ENCODE measurements at regions of chr9 and their contacts with region 1.

Region 1: DNA sequence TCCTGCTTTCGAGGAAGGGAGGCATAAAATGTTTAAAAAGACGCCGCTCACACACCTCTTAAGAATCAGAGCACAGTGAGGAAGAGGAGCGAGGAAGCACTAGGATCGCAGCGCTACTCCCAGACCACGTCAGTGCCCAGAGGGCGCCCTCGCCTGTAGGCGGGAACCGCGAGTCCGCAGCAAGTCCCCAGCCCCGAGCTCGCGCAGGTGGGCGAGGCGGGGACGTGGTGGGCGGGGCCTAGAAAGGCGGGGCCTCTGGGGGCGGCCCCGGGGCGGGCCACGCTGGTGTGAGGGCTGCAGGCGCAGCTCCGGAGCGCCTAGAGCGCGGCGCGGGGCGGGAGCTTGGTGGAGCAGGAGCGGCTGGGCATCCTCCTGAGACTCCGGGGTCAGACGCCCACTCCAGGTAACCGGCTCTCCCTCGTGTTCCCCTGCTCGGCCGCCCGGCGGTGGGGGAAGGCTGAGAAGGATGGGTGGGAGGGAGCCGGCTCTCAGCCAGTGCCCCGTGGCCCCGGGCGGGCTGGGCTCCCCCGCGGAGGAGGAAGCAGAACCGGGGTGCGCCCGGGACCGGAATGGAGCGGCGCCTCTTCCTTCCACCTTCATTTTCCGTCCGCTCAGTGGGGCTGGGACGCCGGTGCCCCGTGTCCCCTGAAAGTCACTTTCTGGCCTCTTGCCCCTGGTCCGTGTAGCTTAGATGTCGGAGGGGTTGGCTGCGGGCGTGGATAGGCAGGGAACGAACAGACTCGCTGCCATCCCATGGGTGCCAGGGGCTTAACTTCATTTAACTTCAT is at the start of gene GCNT1:
- DNase-seq: peak; percentile 99
- ATAC-seq: peak; percentile 95
- H3K4me3 Mint-ChIP-seq: peak within 1 kb of the TSS; percentile 94
- H3K27ac Mint-ChIP-seq: peak within 1 kb of the TSS; percentile 84
- H3K4me1 Mint-ChIP-seq: peaks cover 57% of the 10 kb centered on the region
- H3K27me3 Mint-ChIP-seq: no peaks in the 10 kb centered on the region
- CTCF ChIP-seq: no peak
- total RNA-seq, gene GCNT1: 9.2 and 10.6 TPM in 2 replicates

Region 2: GRCh38 chr9:75027187-75028107 is 1431.7 kb before region 1 on chr9:
- CTCF ChIA-PET with region 1: no interaction called
- POLR2A ChIA-PET with region 1: interaction called, 3 read pairs
- intact Hi-C with region 1: loop called (anchors 5 kb)
- DNase-seq: no peak
- ATAC-seq: peak; percentile 29
- H3K4me3 Mint-ChIP-seq: peak overlapping the region; percentile 96
- H3K27ac Mint-ChIP-seq: peak overlapping the region; percentile 95
- H3K4me1 Mint-ChIP-seq: peaks cover 36% of the 10 kb centered on the region
- H3K27me3 Mint-ChIP-seq: no peaks in the 10 kb centered on the region
- CTCF ChIP-seq: no peak

Region 3: GRCh38 chr9:76403352-76403751 is 55.7 kb before region 1 on chr9:
- CTCF ChIA-PET with region 1: no interaction called
- POLR2A ChIA-PET with region 1: no interaction called
- intact Hi-C with region 1: loop called (anchors 2 kb)
- DNase-seq: no peak
- ATAC-seq: peak; percentile 70
- H3K4me3 Mint-ChIP-seq: peak overlapping the region; percentile 8
- H3K27ac Mint-ChIP-seq: peak overlapping the region; percentile 19
- H3K4me1 Mint-ChIP-seq: peaks cover 13% of the 10 kb centered on the region
- H3K27me3 Mint-ChIP-seq: no peaks in the 10 kb centered on the region
- CTCF ChIP-seq: peak; percentile 20

Region 4: DNA sequence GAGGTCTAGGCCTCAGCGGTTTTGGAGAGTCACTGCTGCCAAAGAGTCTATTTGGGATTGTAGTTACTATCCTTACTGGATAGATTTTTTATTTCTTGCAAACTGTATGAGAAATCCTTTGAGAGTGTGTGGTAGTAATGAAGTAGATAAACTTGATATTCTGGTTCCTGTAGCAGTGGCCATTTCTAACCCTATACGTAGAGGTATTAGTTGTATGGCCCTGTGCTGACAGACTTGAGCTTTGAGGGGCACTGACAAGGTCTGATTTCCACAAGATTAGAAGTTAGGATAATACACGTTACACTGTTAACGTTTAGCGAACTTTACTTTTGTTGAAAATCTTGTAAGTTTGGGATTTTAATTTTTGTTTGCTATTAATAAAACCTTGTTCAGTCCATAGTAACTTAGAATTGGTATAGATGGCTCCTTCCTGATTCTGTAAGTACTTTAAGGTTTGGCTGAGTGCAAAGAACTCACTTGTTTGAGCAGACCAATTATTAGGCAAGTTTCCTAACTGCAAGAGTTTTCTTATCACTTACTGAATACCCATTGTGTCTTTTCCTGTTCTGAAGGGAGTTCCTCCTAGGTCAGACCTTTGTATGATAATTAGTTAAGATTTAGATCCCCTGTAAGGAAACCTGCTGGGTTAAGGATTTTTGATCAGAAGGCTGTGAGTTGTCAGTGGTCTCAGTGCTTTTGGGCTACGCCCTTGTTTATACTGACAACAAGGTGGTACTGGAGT is 31.3 kb after region 1 on chr9:
- CTCF ChIA-PET with region 1: interaction called, 4 read pairs
- POLR2A ChIA-PET with region 1: interaction called, 3 read pairs
- intact Hi-C with region 1: loop called (anchors 5 kb)
- DNase-seq: no peak
- ATAC-seq: no peak
- H3K4me3 Mint-ChIP-seq: no peak overlapping the region
- H3K27ac Mint-ChIP-seq: no peak overlapping the region
- H3K4me1 Mint-ChIP-seq: peaks cover 56% of the 10 kb centered on the region
- H3K27me3 Mint-ChIP-seq: no peaks in the 10 kb centered on the region
- CTCF ChIP-seq: no peak

Region 5: DNA sequence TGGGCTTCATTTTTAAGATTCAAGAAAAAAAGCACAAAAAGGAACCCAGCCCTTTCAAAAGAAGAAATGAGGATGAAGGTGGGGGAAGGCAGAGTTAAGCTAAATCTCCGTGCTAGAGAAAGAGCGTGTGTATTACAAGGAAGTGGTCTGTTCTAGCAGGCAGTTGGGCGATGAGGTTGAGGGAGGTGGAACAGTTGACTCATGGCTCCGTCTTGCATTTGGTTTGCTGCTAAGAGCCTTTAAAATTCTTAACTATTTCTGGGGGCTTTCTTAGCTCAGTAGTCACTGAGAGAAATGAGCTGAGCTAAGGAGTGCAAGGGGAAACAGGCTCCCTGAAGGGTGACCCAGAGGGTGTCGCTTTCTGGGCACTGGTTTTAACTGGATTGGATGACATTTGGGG is 117.2 kb after region 1 on chr9:
- CTCF ChIA-PET with region 1: no interaction called
- POLR2A ChIA-PET with region 1: interaction called, 7 read pairs
- intact Hi-C with region 1: loop called (anchors 1 kb)
- DNase-seq: peak; percentile 22
- ATAC-seq: peak; percentile 91
- H3K4me3 Mint-ChIP-seq: peak overlapping the region; percentile 9
- H3K27ac Mint-ChIP-seq: peak overlapping the region; percentile 76
- H3K4me1 Mint-ChIP-seq: peaks cover 46% of the 10 kb centered on the region
- H3K27me3 Mint-ChIP-seq: peaks cover 2% of the 10 kb centered on the region
- CTCF ChIP-seq: no peak

Region 6: DNA sequence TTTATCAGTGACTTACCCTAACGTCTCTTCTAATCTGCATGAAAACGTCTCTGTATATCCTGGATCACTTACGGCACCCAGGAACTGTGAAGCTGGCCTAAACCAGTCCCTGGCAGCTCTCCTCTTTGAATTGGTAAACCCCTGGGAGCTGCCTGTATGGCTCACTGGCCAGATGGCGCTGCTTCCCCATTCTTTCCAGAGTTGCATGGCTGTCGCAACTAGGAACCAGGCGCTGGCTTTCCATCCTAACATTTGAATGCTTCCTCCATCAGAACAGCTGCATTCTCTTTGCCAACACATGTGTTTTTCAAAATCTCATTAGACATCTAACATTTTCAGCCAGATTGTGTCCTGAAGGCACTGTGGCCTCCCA is 297.2 kb after region 1 on chr9:
- CTCF ChIA-PET with region 1: no interaction called
- POLR2A ChIA-PET with region 1: interaction called, 3 read pairs
- intact Hi-C with region 1: loop called (anchors 5 kb)
- DNase-seq: no peak
- ATAC-seq: no peak
- H3K4me3 Mint-ChIP-seq: peak overlapping the region; percentile 83
- H3K27ac Mint-ChIP-seq: peak overlapping the region; percentile 78
- H3K4me1 Mint-ChIP-seq: peaks cover 61% of the 10 kb centered on the region
- H3K27me3 Mint-ChIP-seq: no peaks in the 10 kb centered on the region
- CTCF ChIP-seq: no peak

Measured in activated B cell treated with CpG ODN at 0.5 μM for 24 hours (primary cell).